WTC11 (cell line): ENCODE measurements at regions of chr2 and their contacts with region 1.

Region 1: DNA sequence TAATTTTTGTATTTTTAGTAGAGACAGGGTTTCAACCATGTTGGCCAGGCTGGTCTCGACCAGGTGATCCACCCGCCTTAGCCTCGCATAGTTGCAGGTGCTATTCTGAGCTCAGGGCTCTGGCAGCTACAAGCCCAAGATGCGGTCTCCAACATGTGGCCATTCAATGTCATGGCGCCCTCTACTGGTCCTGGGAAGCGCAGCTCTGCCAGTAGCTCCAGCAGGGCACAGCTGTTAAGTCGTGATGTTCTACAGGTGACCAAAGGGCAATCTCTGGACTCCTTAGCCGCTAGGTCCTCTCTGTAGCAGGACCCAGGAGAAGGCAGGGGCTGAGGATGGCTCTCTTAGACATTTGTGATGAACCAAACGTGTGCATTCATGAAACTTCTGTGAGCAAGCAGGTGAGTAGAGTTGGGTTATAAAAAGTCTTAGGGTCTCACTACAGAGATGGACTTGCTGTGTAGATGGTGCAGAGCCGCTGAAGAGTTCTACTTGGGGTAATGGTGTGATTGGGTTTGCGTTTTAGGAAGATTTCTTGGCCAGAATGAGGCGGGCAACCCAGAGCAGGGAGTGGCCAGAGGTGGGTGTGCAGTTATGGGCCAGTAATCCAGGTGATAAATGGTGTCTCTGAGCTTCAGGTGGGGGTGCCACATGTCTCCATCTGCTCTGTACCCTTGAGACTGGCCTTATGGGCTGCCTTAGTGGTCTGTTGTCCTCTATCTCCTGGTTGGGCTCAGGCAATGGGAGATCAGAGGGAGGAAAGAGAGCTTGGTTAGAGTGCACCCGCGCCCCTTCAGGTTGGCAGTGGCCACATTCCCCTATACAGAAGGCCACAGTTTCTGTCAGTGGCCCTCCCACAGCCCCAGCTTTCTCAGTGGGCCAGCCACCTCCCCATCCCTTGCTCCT is 31.0 kb downstream of the IL37 start:
- DNase-seq: peak; percentile 89
- ATAC-seq: peak; percentile 100
- H3K4me3 Mint-ChIP-seq: no peak overlapping the region
- H3K27ac Mint-ChIP-seq: no peak overlapping the region
- H3K4me1 Mint-ChIP-seq: no peaks in the 10 kb centered on the region
- H3K27me3 Mint-ChIP-seq: peaks cover 44% of the 10 kb centered on the region
- CTCF ChIP-seq: peak; percentile 71

Region 2: DNA sequence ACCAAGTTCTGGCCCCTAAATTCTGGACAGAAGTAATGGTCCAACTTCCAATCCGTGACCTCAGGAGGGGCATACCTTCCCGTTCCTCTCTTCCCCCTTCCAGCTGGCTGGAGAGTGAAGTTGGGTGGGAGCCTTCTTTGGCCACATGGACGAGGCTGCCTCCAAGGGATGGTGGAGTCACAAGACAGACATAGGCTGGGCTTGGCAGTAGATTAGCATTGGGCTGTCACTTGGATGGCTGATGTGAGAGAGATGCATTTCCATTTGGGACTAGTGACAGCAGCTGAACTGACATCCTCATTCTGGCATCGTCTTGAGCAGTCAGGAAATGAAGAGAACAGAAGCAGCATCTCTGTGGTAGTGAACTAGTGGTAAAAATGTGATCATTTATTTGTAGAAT is 208.6 kb before region 1 on chr2:
- CTCF ChIA-PET with region 1: interaction called, 64 read pairs
- POLR2A ChIA-PET with region 1: no interaction called
- DNase-seq: no peak
- ATAC-seq: no peak
- H3K4me3 Mint-ChIP-seq: no peak overlapping the region
- H3K27ac Mint-ChIP-seq: no peak overlapping the region
- H3K4me1 Mint-ChIP-seq: no peaks in the 10 kb centered on the region
- H3K27me3 Mint-ChIP-seq: no peaks in the 10 kb centered on the region
- CTCF ChIP-seq: no peak

Region 3: GRCh38 chr2:112817082-112817689 is 124.8 kb before region 1 on chr2:
- CTCF ChIA-PET with region 1: interaction called, 10 read pairs
- POLR2A ChIA-PET with region 1: no interaction called
- DNase-seq: no peak
- ATAC-seq: peak; percentile 61
- H3K4me3 Mint-ChIP-seq: no peak overlapping the region
- H3K27ac Mint-ChIP-seq: no peak overlapping the region
- H3K4me1 Mint-ChIP-seq: peaks cover 59% of the 10 kb centered on the region
- H3K27me3 Mint-ChIP-seq: no peaks in the 10 kb centered on the region
- CTCF ChIP-seq: no peak

Region 4: DNA sequence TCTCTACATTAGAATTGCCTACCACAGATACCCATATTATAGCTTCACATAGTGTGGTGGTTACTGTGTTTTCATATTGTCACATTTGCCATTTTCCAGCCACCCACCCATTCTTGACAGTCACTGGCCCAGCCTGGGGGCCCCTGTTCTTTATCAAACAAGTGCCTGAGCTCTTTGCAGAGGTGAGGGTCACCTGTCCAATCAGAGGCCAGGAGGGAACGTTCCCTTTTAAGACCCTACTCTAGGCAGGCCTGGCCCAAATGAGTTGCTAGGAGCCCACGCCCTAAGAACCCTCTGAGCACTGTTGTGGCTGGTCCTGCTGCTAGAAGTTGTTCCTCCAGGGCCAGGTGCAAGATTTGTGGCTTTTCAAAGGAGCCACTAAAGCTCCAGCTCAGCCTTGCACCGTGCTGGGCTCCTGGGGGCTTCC is 25.8 kb before region 1 on chr2:
- CTCF ChIA-PET with region 1: interaction called, 15 read pairs
- POLR2A ChIA-PET with region 1: no interaction called
- DNase-seq: no peak
- ATAC-seq: no peak
- H3K4me3 Mint-ChIP-seq: no peak overlapping the region
- H3K27ac Mint-ChIP-seq: no peak overlapping the region
- H3K4me1 Mint-ChIP-seq: no peaks in the 10 kb centered on the region
- H3K27me3 Mint-ChIP-seq: peaks cover 33% of the 10 kb centered on the region
- CTCF ChIP-seq: no peak

Region 5: DNA sequence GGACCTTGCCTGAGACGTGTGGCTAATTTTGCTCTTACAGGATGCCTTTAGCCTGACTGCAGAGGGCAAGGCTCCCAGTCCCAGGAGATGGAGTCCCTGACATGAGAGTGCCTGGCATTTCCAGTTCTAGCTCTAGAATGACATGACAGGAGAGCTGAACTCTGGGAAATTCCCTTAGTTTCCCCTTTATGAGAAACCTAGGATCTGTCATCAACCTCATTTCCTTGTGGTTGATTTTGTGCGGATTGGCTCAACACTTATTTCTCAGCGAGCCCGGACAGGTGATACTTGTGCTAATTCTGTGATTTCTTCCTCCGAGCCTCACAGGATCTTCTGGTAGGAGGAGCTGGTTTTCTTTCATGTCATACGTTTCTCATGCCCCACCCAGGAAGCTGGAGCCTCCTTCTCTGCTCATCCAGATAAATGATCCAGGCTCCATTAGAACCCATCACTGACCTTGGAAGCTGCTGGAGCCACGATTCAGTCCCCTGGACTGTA is 35.6 kb after region 1 on chr2 and contains the start of gene IL36G:
- CTCF ChIA-PET with region 1: interaction called, 10 read pairs
- POLR2A ChIA-PET with region 1: no interaction called
- DNase-seq: no peak
- ATAC-seq: no peak
- H3K4me3 Mint-ChIP-seq: no peak within 1 kb of the TSS
- H3K27ac Mint-ChIP-seq: no peak within 1 kb of the TSS
- H3K4me1 Mint-ChIP-seq: no peaks in the 10 kb centered on the region
- H3K27me3 Mint-ChIP-seq: peaks cover 46% of the 10 kb centered on the region
- CTCF ChIP-seq: no peak
- total RNA-seq, gene IL36G: 0.32 TPM in 1 of 3 replicates, not detected in the others

Region 6: DNA sequence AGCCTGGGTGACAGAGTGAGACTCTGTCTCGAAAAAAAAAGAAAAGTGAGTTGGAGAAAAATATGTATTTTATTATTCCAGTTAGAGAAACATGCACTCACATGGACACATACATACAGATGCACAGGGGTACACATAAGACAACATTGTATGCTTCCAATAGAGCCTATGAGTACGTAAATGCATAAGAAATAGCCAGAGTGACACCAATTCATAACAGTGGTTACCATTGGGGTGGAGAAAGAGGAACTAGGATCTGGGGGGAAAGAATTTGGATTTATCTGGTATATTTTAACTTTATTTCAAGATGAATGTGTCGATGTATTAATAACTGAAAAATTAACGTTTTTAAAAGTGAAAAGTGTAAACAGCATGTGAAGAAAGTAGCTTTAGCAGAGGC is 79.3 kb after region 1 on chr2:
- CTCF ChIA-PET with region 1: no interaction called
- POLR2A ChIA-PET with region 1: no interaction called
- DNase-seq: no peak
- ATAC-seq: no peak
- H3K4me3 Mint-ChIP-seq: no peak overlapping the region
- H3K27ac Mint-ChIP-seq: no peak overlapping the region
- H3K4me1 Mint-ChIP-seq: no peaks in the 10 kb centered on the region
- H3K27me3 Mint-ChIP-seq: peaks cover 63% of the 10 kb centered on the region
- CTCF ChIP-seq: no peak